CD4-positive, alpha-beta memory T cell (primary cell): ENCODE measurements at regions of chr12 and their contacts with region 1.

Region 1: DNA sequence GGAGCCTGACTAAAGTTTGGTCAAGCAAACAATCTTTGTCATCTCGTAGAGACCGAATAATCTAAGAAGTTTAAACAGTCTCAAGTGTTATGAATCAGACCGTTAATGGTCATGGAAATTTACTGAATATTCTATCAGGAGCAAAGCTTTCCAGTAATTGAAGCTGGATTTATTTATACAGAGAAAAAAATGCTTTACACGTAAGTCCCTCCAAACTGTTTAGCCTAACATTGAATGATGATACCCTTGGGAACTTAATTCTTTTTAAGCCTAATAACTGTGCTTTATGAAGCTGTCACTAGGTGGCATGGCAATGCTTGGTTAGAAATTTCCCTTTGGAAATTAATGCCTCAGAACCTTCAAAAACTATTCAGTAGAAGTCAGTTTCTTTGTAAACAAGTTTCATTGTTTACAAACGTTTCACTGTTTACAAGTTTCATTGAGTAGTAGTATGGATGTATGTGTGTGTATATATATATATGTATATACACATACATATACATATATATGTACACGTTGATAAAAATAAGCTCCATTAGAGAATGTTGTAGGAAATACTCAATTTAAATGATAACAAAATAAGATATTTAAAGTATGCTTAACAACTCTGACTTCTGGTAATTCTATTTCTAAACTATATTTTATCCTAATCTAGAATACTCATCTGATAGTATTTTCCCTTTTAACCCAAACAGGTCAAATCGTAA is 32.1 kb downstream of the DEPDC4 start:
- DNase-seq: peak in 4 of 5 donors; percentile 14 to 25 (median 20)
- H3K4me3 ChIP-seq: no peak overlapping the region
- H3K4me3 Mint-ChIP-seq: no peak overlapping the region
- H3K27ac ChIP-seq: no peak overlapping the region
- H3K27ac Mint-ChIP-seq: no peak overlapping the region
- H3K4me1 ChIP-seq: no peaks in the 10 kb centered on the region
- H3K4me1 Mint-ChIP-seq: no peaks in the 10 kb centered on the region
- H3K27me3 ChIP-seq: no peaks in the 10 kb centered on the region
- H3K27me3 Mint-ChIP-seq: no peaks in the 10 kb centered on the region

Region 2: GRCh38 chr12:100224193-100224592 is 10.6 kb before region 1 on chr12:
- CTCF ChIA-PET with region 1: interaction called, 11 read pairs
- POLR2A ChIA-PET with region 1: no interaction called
- intact Hi-C with region 1: no loop called
- DNase-seq: no peak
- H3K4me3 ChIP-seq: no peak overlapping the region
- H3K4me3 Mint-ChIP-seq: no peak overlapping the region
- H3K27ac ChIP-seq: no peak overlapping the region
- H3K27ac Mint-ChIP-seq: no peak overlapping the region
- H3K4me1 ChIP-seq: no peaks in the 10 kb centered on the region
- H3K4me1 Mint-ChIP-seq: no peaks in the 10 kb centered on the region
- H3K27me3 ChIP-seq: no peaks in the 10 kb centered on the region
- H3K27me3 Mint-ChIP-seq: no peaks in the 10 kb centered on the region

Region 3: GRCh38 chr12:100554608-100555077 is 319.9 kb after region 1 on chr12:
- CTCF ChIA-PET with region 1: interaction called, 36 read pairs
- POLR2A ChIA-PET with region 1: no interaction called
- intact Hi-C with region 1: no loop called
- DNase-seq: peak in 2 of 5 donors; percentile 11 to 15
- H3K4me3 ChIP-seq: no peak overlapping the region
- H3K4me3 Mint-ChIP-seq: no peak overlapping the region
- H3K27ac ChIP-seq: no peak overlapping the region
- H3K27ac Mint-ChIP-seq: no peak overlapping the region
- H3K4me1 ChIP-seq: no peaks in the 10 kb centered on the region
- H3K4me1 Mint-ChIP-seq: no peaks in the 10 kb centered on the region
- H3K27me3 ChIP-seq: no peaks in the 10 kb centered on the region
- H3K27me3 Mint-ChIP-seq: peaks cover 4 to 8% of the 10 kb centered on the region in 2 donors

Region 4: DNA sequence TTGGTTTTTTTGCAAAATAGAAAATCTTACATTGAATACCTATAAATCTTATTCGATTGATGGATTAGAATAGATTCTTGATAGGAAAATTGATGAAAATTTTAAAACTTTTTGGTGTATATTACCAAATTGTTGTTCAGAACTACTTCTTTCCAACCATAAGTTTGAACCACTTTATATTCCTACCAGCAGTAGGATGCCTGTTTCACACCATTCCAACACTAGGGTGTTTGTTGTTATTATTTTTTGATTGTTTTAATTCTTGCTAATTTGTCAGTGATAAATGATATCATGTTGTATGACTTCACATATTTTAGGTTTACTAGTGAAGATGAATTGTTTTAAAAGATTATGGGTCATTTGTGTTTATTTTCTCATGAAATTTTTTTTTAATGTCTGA is 1088.5 kb after region 1 on chr12:
- CTCF ChIA-PET with region 1: interaction called, 5 read pairs
- POLR2A ChIA-PET with region 1: no interaction called
- intact Hi-C with region 1: loop called (anchors 2 kb)
- DNase-seq: no peak
- H3K4me3 ChIP-seq: no peak overlapping the region
- H3K4me3 Mint-ChIP-seq: no peak overlapping the region
- H3K27ac ChIP-seq: no peak overlapping the region
- H3K27ac Mint-ChIP-seq: no peak overlapping the region
- H3K4me1 ChIP-seq: no peaks in the 10 kb centered on the region
- H3K4me1 Mint-ChIP-seq: no peaks in the 10 kb centered on the region
- H3K27me3 ChIP-seq: no peaks in the 10 kb centered on the region
- H3K27me3 Mint-ChIP-seq: no peaks in the 10 kb centered on the region